ENCODE measurements at regions of chr15 and their contacts with region 1.

Region 1: GRCh38 chr15:78241007-78241406 is 6.6 kb upstream of the ACSBG1 start:
- DNase-seq: peak; percentile 91
- H3K4me3 ChIP-seq: no peak overlapping the region
- H3K27ac ChIP-seq: no peak overlapping the region
- H3K4me1 ChIP-seq: peaks cover 0 to 25% (median 19%) of the 10 kb centered on the region in 4 donors
- H3K27me3 ChIP-seq: no peaks in the 10 kb centered on the region
- CTCF ChIP-seq: peak; percentile 85 to 89 (median 87)
- EP300 ChIP-seq: no peak
- POLR2A ChIP-seq: no peak

Region 2: GRCh38 chr15:77959432-77959879 is 281.6 kb before region 1 on chr15:
- in situ Hi-C with region 1: loop called (anchors 25 kb)
- intact Hi-C with region 1: no loop called
- DNase-seq: peak; percentile 87
- H3K4me3 ChIP-seq: peak overlapping the region in 1 of 4 donors; percentile 20
- H3K27ac ChIP-seq: no peak overlapping the region
- H3K4me1 ChIP-seq: peaks cover 0 to 10% (median 3%) of the 10 kb centered on the region in 4 donors
- H3K27me3 ChIP-seq: no peaks in the 10 kb centered on the region
- CTCF ChIP-seq: peak; percentile 93 to 99 (median 97)
- EP300 ChIP-seq: no peak
- POLR2A ChIP-seq: no peak

Region 3: DNA sequence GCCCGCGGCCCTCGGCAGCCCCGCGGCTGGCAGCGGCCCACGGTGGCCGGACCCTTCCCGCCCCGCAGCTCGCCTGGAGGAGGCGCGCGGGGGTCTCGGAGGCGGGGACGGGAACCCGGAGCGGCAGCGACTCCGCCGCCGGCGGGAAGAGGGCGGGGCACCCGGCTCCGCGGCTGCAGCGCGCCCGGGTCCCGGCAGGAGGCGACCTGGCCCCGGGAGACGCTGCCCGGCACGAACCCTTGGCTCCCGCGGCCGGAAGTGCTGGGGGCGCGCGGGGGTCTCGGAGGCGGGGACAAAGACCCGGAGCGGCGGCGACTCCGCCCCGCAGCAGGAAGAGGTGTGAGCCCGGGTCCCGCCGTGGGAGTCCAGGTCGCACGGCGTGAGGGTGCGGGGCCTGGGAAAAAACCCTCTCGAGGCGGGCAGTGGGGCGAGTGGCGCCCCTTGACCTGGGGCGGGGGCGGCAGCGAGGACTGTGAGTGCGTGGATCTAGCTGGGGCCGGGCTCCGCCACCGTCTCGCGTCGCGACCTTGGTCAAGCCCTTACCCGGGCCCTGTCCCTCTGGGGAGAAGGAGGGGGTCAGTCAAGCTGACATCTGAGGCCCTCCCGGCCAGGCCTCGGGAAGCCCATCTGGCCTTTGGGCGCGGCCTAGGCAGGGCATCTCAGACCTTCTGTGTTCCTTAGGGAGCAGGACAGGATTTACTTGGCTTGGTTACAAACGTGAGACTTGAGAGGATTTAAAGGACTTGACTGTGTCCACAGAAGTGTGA is 109.5 kb before region 1 on chr15 and contains the start of gene CIB2:
- in situ Hi-C with region 1: no loop called
- intact Hi-C with region 1: no loop called
- DNase-seq: peak; percentile 80
- H3K4me3 ChIP-seq: peak within 1 kb of the TSS; percentile 41 to 73 (median 64)
- H3K27ac ChIP-seq: peak within 1 kb of the TSS; percentile 80 to 87 (median 84)
- H3K4me1 ChIP-seq: peaks cover 7 to 23% (median 10%) of the 10 kb centered on the region in 4 donors
- H3K27me3 ChIP-seq: no peaks in the 10 kb centered on the region
- CTCF ChIP-seq: peak; percentile 53 to 87 (median 75)
- EP300 ChIP-seq: no peak
- POLR2A ChIP-seq: peak; percentile 49
- total RNA-seq, gene CIB2: 8.4 to 19.5 (median 9.5) TPM

Region 4: DNA sequence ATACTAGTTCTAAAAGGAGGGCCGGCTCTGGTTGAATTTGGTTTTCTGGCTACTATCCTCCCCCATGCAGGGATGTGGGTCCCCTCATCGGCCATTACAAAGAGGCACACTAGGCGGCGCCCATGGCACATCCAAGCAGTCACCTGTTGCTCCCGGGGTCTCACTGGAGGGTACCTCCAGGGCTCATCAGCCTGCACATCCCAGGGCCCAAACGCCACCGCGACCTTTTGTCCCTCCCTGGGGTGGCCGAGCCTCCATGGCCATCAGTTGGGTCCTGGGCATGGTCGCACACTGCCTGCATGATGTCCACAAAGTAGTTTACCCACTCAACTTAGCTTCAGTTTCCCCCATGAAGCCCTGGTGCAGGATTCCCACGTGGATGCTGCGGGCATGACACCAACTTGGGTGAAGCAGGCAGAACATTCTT is 63.5 kb before region 1 on chr15:
- in situ Hi-C with region 1: no loop called
- intact Hi-C with region 1: loop called (anchors 5 kb)
- DNase-seq: peak; percentile 51
- H3K4me3 ChIP-seq: no peak overlapping the region
- H3K27ac ChIP-seq: no peak overlapping the region
- H3K4me1 ChIP-seq: no peaks in the 10 kb centered on the region
- H3K27me3 ChIP-seq: no peaks in the 10 kb centered on the region
- CTCF ChIP-seq: peak; percentile 38 to 63 (median 57)
- EP300 ChIP-seq: no peak
- POLR2A ChIP-seq: no peak